ENCODE measurements at regions of chr5 and their contacts with region 1.

Region 1: GRCh38 chr5:142699184-142699720 is 13.4 kb upstream of the FGF1 start:
- DNase-seq: peak; percentile 87 to 93
- ATAC-seq: peak; percentile 83 to 92 (median 90)
- H3K4me3 ChIP-seq: no peak overlapping the region
- H3K27ac ChIP-seq: peak overlapping the region; percentile 56 to 94 (median 87)
- H3K4me1 ChIP-seq: peaks cover 9 to 55% (median 39%) of the 10 kb centered on the region in 9 donors
- H3K27me3 ChIP-seq: no peaks in the 10 kb centered on the region
- CTCF ChIP-seq: peak; percentile 94 to 99 (median 97)

Region 2: GRCh38 chr5:142000703-142001484 is 698.4 kb before region 1 on chr5:
- intact Hi-C with region 1: loop called in 1 of 10 experiments (anchors 10 kb)
- DNase-seq: no peak
- ATAC-seq: no peak
- H3K4me3 ChIP-seq: no peak overlapping the region
- H3K27ac ChIP-seq: peak overlapping the region in 2 of 10 donors; percentile 33 to 40
- H3K4me1 ChIP-seq: peaks cover 0 to 6% (median 0%) of the 10 kb centered on the region in 9 donors
- H3K27me3 ChIP-seq: no peaks in the 10 kb centered on the region
- CTCF ChIP-seq: peak in 6 of 9 donors; percentile 20 to 41 (median 35)

Region 3: DNA sequence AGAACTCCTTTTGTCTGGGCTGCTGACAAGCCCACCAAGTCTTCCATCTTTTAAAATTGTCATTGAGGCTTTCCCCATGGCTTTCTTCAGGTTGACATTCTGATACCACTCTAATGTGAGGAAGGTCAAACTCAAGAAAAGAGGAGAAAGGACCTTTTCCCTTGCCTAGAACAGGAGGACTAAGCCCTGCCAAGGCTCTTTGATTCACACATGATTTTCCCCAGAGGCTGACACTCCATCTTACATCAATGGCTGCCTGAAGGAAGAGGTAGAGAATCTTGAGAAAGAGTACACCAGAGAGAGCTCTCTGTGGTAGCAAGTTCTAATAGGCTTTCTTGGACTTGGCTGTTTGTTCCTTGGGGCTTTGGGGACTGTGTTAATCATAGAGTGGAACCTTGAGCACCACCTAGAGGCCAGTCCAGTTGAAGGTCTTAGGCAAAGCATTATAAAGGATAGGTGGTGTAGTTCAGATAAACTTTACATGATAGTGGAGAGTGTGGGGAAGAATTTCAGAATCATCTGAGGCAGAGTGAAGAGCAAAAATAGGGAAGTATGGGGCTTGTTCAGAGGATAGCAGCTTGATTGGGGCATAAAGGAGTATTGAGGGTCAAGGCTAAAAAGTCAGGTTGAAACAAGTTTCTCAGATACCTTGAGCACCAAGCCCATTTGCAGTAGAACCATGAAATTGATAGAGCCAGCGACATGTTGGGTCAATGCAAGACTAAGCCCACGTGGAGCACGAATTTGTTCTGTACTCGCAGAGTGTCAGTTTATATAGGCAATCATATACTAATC is 553.9 kb before region 1 on chr5:
- intact Hi-C with region 1: loop called in 8 of 10 experiments (anchors 5 to 10 kb)
- DNase-seq: peak in 1 of 2 donors; percentile 80
- ATAC-seq: peak; percentile 71 to 91 (median 84)
- H3K4me3 ChIP-seq: no peak overlapping the region
- H3K27ac ChIP-seq: no peak overlapping the region
- H3K4me1 ChIP-seq: peaks cover 0 to 8% (median 0%) of the 10 kb centered on the region in 9 donors
- H3K27me3 ChIP-seq: no peaks in the 10 kb centered on the region
- CTCF ChIP-seq: peak; percentile 59 to 80 (median 72)

Region 4: DNA sequence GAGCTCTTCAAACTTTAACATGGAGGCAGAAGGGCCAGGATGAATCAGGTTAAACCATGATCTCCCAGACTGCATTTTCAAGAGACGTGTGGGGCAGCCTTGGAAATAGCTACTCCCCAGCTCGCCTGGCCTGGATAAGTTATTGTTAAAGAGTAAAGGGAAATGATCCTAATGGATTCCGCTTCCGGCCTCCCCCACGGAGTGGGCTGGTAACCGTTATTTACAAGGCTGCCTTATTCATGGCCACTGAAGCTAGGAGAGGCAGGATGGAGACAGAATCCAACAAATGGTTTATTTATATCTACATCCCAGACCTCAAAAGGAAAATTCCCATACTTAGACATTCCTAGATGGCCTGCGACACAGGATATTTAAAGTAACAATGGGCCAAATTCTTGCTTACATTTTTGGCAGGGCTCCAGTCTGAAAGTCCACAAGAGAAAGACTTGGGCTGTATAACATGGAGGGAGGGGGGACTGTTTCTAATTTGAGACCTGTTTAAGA is 402.3 kb before region 1 on chr5:
- intact Hi-C with region 1: loop called in 1 of 10 experiments (anchors 10 kb)
- DNase-seq: peak; percentile 27 to 86
- ATAC-seq: peak; percentile 67 to 91 (median 84)
- H3K4me3 ChIP-seq: no peak overlapping the region
- H3K27ac ChIP-seq: peak overlapping the region; percentile 8 to 76 (median 56)
- H3K4me1 ChIP-seq: peaks cover 5 to 53% (median 31%) of the 10 kb centered on the region in 9 donors
- H3K27me3 ChIP-seq: no peaks in the 10 kb centered on the region
- CTCF ChIP-seq: no peak

Region 5: DNA sequence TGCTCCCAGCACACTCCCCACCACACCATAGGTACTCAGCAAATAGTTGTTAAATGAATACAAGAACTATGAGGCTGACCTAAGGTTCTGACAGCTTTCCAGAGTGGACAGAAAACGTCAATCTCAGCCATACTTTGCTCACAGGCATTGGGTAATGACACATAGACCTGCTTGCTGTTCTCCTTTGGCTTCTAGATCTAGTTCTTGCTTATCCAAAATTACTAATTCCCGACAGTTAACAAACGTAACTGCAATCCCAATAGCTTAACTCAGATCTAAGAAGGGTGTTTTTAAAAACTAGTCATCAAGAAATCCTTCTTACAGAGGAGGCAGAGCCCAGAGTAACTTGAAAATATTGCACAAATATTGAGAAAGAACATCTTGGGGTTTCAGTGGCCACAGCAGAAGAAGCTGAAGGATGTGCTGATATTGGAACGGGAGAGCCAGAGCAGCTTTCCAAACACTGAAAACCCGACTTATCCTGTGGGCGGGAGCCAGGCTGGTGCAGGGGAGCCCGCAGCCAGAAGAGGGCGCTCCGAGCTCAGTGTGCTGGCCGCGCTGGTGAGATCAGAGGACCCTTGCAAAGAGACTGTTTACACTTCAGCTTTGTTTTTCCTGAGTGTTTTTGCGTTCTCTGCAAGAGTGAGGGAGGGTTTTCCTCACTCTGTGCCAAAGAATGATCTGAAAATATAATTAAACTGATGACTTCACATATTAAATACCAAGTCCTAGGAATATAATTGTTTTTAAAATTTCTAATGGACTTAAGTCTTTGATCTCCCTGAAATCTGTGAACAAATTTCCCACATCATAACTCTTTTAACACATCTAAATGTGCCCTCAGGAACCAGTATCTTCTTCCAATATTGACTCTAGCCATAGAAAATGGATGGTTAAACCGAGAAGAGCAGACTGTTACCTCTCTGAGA is 43.6 kb before region 1 on chr5:
- intact Hi-C with region 1: loop called (anchors 1 to 5 kb)
- DNase-seq: peak; percentile 86 to 89
- ATAC-seq: peak; percentile 85 to 96 (median 92)
- H3K4me3 ChIP-seq: no peak overlapping the region
- H3K27ac ChIP-seq: peak overlapping the region in 9 of 10 donors; percentile 3 to 81 (median 66)
- H3K4me1 ChIP-seq: peaks cover 5 to 53% (median 27%) of the 10 kb centered on the region in 9 donors
- H3K27me3 ChIP-seq: peaks cover 0 to 7% (median 0%) of the 10 kb centered on the region in 7 donors
- CTCF ChIP-seq: peak; percentile 98 to 100 (median 99)

Region 6: GRCh38 chr5:143536364-143536763 is 837.1 kb after region 1 on chr5:
- intact Hi-C with region 1: no loop called
- DNase-seq: no peak
- ATAC-seq: peak in 6 of 8 donors; percentile 29 to 94 (median 55)
- H3K4me3 ChIP-seq: no peak overlapping the region
- H3K27ac ChIP-seq: peak overlapping the region in 1 of 10 donors; percentile 45
- H3K4me1 ChIP-seq: peaks cover 0 to 9% (median 0%) of the 10 kb centered on the region in 9 donors
- H3K27me3 ChIP-seq: no peaks in the 10 kb centered on the region
- CTCF ChIP-seq: no peak